Right cardiac atrium (tissue), 5 donors: ENCODE measurements at regions of chr2 and their contacts with region 1.

Region 1: GRCh38 chr2:207632575-207633493 is 7.6 kb upstream of the METTL21A start:
- DNase-seq: no peak
- ATAC-seq: peak in 1 of 2 donors; percentile 24
- H3K4me3 ChIP-seq: no peak overlapping the region
- H3K27ac ChIP-seq: no peak overlapping the region
- H3K4me1 ChIP-seq: no peaks in the 10 kb centered on the region
- H3K27me3 ChIP-seq: no peaks in the 10 kb centered on the region

Region 2: GRCh38 chr2:207725873-207726578 is 93.2 kb after region 1 on chr2:
- intact Hi-C with region 1: loop called in 1 of 4 experiments (anchors 10 kb)
- DNase-seq: no peak
- ATAC-seq: no peak
- H3K4me3 ChIP-seq: no peak overlapping the region
- H3K27ac ChIP-seq: no peak overlapping the region
- H3K4me1 ChIP-seq: no peaks in the 10 kb centered on the region
- H3K27me3 ChIP-seq: no peaks in the 10 kb centered on the region

Region 3: GRCh38 chr2:209097168-209097567 is 1464.3 kb after region 1 on chr2:
- intact Hi-C with region 1: no loop called
- DNase-seq: no peak
- ATAC-seq: no peak
- H3K4me3 ChIP-seq: no peak overlapping the region
- H3K27ac ChIP-seq: no peak overlapping the region
- H3K4me1 ChIP-seq: no peaks in the 10 kb centered on the region
- H3K27me3 ChIP-seq: no peaks in the 10 kb centered on the region